Activated naive CD4-positive, alpha-beta T cell treated with anti-CD3 and anti-CD28 coated beads for 36 hours (primary cell): ENCODE measurements at regions of chr14 and their contacts with region 1.

Region 1: DNA sequence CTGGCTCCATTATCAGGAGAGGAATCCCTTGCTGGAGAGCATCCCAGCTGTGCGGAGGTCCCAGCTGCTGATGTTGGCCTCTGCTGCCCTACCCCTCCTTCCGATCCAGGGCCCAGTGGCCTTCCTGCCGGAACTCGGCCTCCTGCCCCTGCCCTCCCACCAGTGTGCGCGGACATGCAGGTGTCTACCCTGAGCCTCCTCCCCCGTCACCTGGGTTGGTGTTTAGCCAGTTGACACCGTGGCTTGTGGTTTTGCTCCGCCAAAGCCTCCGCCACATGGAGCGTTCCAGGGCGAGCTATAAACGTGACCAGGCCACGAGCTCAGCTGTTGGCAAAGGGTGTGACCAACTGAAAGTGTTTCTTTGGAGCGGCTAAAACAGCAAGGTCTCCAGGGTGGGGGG is 1104.3 kb downstream of the BCL11B start:
- DNase-seq: peak; percentile 65
- H3K4me3 Mint-ChIP-seq: peak overlapping the region; percentile 56
- H3K27ac Mint-ChIP-seq: peak overlapping the region; percentile 98
- H3K4me1 Mint-ChIP-seq: peaks cover 93% of the 10 kb centered on the region
- H3K27me3 Mint-ChIP-seq: no peaks in the 10 kb centered on the region

Region 2: GRCh38 chr14:97912217-97912616 is 255.5 kb before region 1 on chr14:
- CTCF ChIA-PET with region 1: no interaction called
- intact Hi-C with region 1: no loop called
- DNase-seq: no peak
- H3K4me3 Mint-ChIP-seq: no peak overlapping the region
- H3K27ac Mint-ChIP-seq: no peak overlapping the region
- H3K4me1 Mint-ChIP-seq: peaks cover 14% of the 10 kb centered on the region
- H3K27me3 Mint-ChIP-seq: no peaks in the 10 kb centered on the region

Region 3: GRCh38 chr14:97994020-97994531 is 173.6 kb before region 1 on chr14:
- CTCF ChIA-PET with region 1: no interaction called
- intact Hi-C with region 1: loop called (anchors 2 kb)
- DNase-seq: peak; percentile 71
- H3K4me3 Mint-ChIP-seq: peak overlapping the region; percentile 70
- H3K27ac Mint-ChIP-seq: peak overlapping the region; percentile 100
- H3K4me1 Mint-ChIP-seq: peaks cover 82% of the 10 kb centered on the region
- H3K27me3 Mint-ChIP-seq: no peaks in the 10 kb centered on the region

Region 4: GRCh38 chr14:98182393-98183055 is 14.8 kb after region 1 on chr14:
- CTCF ChIA-PET with region 1: interaction called, 11 read pairs
- intact Hi-C with region 1: loop called (anchors 1 kb)
- DNase-seq: peak; percentile 81
- H3K4me3 Mint-ChIP-seq: peak overlapping the region; percentile 45
- H3K27ac Mint-ChIP-seq: peak overlapping the region; percentile 96
- H3K4me1 Mint-ChIP-seq: peaks cover 92% of the 10 kb centered on the region
- H3K27me3 Mint-ChIP-seq: no peaks in the 10 kb centered on the region

Region 5: DNA sequence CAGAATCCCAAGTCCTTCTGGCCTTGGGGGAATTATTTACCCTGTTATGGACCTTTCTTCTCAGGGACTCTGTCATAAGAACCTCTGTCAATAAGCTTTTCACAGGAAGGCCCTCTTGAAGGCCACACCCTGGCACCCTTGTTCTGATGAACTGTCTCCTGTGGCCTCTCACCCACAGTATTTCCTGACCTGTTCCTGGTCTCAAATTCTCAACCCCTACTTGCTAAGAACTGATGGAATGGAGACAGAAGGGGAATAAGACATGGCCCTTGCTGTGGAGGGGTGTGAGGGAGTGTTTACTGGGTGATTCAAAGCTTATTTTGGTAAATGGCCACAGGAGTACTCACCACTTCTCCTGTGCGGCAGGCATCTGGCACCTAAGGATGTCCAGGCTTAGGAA is 21.4 kb after region 1 on chr14:
- CTCF ChIA-PET with region 1: interaction called, 7 read pairs
- intact Hi-C with region 1: loop called (anchors 1 kb)
- DNase-seq: peak; percentile 62
- H3K4me3 Mint-ChIP-seq: peak overlapping the region; percentile 58
- H3K27ac Mint-ChIP-seq: peak overlapping the region; percentile 96
- H3K4me1 Mint-ChIP-seq: peaks cover 96% of the 10 kb centered on the region
- H3K27me3 Mint-ChIP-seq: no peaks in the 10 kb centered on the region